Panc1 (cell line): ENCODE measurements at regions of chr18 and their contacts with region 1.

Region 1: DNA sequence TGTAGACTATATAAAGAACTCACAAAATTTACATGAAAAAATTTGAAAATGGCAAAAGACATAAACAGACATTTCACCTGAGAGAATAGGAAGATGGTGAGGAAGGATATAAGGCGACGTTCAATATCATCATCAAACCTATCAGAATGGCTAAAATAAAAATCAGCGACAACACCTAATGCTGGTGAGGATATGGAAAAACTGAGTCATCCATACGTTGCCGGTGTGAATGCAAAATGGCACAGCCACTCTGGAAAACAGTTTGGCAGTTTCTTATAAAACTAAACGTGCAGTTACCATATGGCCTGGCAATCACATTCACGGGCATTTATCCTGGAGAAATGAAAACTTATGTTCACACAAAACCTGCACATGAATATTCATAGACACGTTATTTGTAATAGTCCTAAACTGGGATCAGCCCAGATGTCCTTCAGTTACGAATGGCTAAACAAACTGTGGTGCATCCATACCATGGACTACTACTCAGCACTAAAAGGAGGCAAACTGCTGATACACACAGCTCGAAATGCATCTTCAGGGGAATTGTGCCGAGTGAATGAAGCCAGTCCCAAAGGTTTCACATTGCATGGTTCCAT is 63.1 kb upstream of the TXNDC2 start:
- DNase-seq: no peak
- ATAC-seq: no peak
- H3K4me3 ChIP-seq: no peak overlapping the region
- H3K27ac ChIP-seq: peak overlapping the region; percentile 17; the same call in 1 of the 2 replicates
- H3K4me1 ChIP-seq: peaks cover 41% of the 10 kb centered on the region
- H3K27me3 ChIP-seq: no peaks in the 10 kb centered on the region
- CTCF ChIP-seq: no peak

Region 2: DNA sequence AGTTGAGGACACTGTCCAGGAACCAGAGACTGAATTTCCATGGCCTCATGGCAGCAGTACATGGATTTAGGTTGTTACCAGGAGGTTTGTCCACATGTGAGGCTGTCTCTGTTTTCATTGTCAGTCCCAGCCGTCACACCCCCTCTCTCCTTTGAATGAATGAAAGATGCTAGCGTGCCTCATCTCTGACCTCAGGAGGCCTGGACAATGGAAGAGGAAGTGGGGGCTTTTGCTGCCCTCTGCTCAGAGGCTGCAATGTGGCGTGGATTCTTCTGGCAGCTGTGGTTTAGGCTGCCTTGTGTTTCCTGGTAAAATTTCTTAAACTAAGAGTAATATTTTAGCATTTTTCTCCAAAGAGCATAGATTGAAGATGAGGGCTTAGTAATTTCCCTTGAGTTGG is 67.1 kb before region 1 on chr18:
- CTCF ChIA-PET with region 1: no interaction called
- POLR2A ChIA-PET with region 1: no interaction called
- in situ Hi-C with region 1: no loop called
- intact Hi-C with region 1: no loop called
- DNase-seq: no peak
- ATAC-seq: no peak
- H3K4me3 ChIP-seq: no peak overlapping the region
- H3K27ac ChIP-seq: peak overlapping the region; percentile 31; the same call in 1 of the 2 replicates
- H3K4me1 ChIP-seq: peaks cover 56% of the 10 kb centered on the region
- H3K27me3 ChIP-seq: no peaks in the 10 kb centered on the region
- CTCF ChIP-seq: no peak

Region 3: DNA sequence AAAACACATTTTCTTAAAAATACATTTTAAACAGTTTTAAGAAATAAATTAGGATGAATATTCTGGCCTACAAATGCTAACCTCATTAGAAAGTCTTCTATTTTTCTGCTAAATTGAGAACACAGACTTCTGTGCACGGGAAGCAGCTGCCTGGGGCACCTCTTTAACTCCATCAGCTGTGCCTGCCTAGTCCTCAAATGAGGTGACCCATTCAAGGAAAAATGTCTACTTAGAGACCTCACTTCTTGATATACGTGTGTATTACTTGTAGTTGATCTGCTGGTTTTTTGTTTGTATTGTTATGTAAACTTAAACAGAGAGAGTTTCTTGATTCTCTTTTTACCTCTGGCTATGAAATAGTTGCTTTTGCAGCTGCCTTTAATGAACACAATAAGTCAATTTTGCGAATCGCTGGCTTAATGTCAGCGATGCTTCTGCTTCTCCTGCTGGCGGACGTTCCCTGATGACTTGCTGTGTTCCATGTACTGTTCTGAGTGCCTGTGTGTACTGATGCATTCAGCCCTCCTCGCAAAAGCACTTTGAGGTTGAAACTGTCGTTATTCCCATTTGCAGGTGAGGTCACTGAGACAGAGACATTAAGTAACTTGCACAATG is 25.6 kb before region 1 on chr18:
- CTCF ChIA-PET with region 1: no interaction called
- POLR2A ChIA-PET with region 1: interaction called, 15 read pairs
- in situ Hi-C with region 1: no loop called
- intact Hi-C with region 1: no loop called
- DNase-seq: no peak
- ATAC-seq: no peak
- H3K4me3 ChIP-seq: no peak overlapping the region
- H3K27ac ChIP-seq: peak overlapping the region; percentile 35; the same call in 1 of the 2 replicates
- H3K4me1 ChIP-seq: peaks cover 7% of the 10 kb centered on the region
- H3K27me3 ChIP-seq: no peaks in the 10 kb centered on the region
- CTCF ChIP-seq: no peak

Region 4: GRCh38 chr18:9835825-9836224 is 13.1 kb after region 1 on chr18:
- CTCF ChIA-PET with region 1: no interaction called
- POLR2A ChIA-PET with region 1: interaction called, 18 read pairs
- in situ Hi-C with region 1: no loop called
- intact Hi-C with region 1: no loop called
- DNase-seq: no peak
- ATAC-seq: no peak
- H3K4me3 ChIP-seq: no peak overlapping the region
- H3K27ac ChIP-seq: no peak overlapping the region
- H3K4me1 ChIP-seq: peaks cover 1% of the 10 kb centered on the region; the same call in 1 of the 2 replicates
- H3K27me3 ChIP-seq: no peaks in the 10 kb centered on the region
- CTCF ChIP-seq: no peak